ENCODE measurements at regions of chr7 and their contacts with region 1.

Region 1: GRCh38 chr7:96479015-96479645 is 157.2 kb upstream of the SLC25A13 start:
- DNase-seq: peak in 3 of 9 donors; percentile 1 to 13 (median 5)
- ATAC-seq: no peak
- H3K4me3 ChIP-seq: peak overlapping the region; percentile 46
- H3K4me3 Mint-ChIP-seq: peak overlapping the region in 9 of 10 donors; percentile 41 to 86 (median 73)
- H3K27ac ChIP-seq: no peak overlapping the region
- H3K27ac Mint-ChIP-seq: peak overlapping the region; percentile 46 to 93 (median 79)
- H3K4me1 ChIP-seq: no peaks in the 10 kb centered on the region
- H3K4me1 Mint-ChIP-seq: peaks cover 11 to 26% (median 16%) of the 10 kb centered on the region in 7 donors
- H3K27me3 ChIP-seq: no peaks in the 10 kb centered on the region
- H3K27me3 Mint-ChIP-seq: peaks cover 0 to 8% (median 0%) of the 10 kb centered on the region in 5 donors

Region 2: GRCh38 chr7:96285579-96285978 is 193.6 kb before region 1 on chr7:
- CTCF ChIA-PET with region 1: no interaction called
- POLR2A ChIA-PET with region 1: no interaction called
- intact Hi-C with region 1: loop called in 1 of 2 experiments (anchors 10 kb)
- DNase-seq: peak in 8 of 9 donors; percentile 26 to 85 (median 78)
- ATAC-seq: peak; percentile 95
- H3K4me3 ChIP-seq: peak overlapping the region; percentile 3
- H3K4me3 Mint-ChIP-seq: peak overlapping the region; percentile 48 to 87 (median 74)
- H3K27ac ChIP-seq: peak overlapping the region; percentile 41
- H3K27ac Mint-ChIP-seq: peak overlapping the region; percentile 81 to 99 (median 94)
- H3K4me1 ChIP-seq: peaks cover 21 to 25% of the 10 kb centered on the region in 2 donors
- H3K4me1 Mint-ChIP-seq: peaks cover 29 to 56% (median 46%) of the 10 kb centered on the region in 7 donors
- H3K27me3 ChIP-seq: no peaks in the 10 kb centered on the region
- H3K27me3 Mint-ChIP-seq: no peaks in the 10 kb centered on the region

Region 3: DNA sequence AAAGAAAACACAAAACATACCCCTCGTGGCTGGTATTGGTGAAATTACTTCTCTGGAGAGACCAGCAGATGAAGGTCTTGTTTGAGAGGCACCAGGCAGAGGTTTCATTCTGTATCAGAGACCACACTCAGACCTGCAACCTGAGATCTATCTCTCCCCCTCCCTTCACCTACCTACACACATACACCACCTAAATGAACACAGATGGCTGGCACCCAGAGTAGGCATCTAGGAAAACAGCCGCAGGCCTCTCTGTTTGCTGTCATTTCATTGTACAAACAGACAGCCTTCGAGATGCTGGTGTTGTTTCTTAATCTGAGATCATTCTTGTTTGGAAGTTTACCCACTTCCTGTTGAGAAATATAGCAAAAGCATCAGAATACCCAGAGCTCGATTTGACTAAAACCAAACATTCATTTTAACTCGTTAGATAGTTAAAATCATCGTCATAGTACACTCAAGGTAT is 16.7 kb after region 1 on chr7:
- CTCF ChIA-PET with region 1: no interaction called
- POLR2A ChIA-PET with region 1: no interaction called
- intact Hi-C with region 1: loop called in 1 of 2 experiments (anchors 2 kb)
- DNase-seq: peak in 3 of 9 donors; percentile 6 to 28 (median 23)
- ATAC-seq: no peak
- H3K4me3 ChIP-seq: no peak overlapping the region
- H3K4me3 Mint-ChIP-seq: peak overlapping the region in 2 of 10 donors; percentile 10 to 74
- H3K27ac ChIP-seq: no peak overlapping the region
- H3K27ac Mint-ChIP-seq: peak overlapping the region in 4 of 9 donors; percentile 22 to 93 (median 46)
- H3K4me1 ChIP-seq: no peaks in the 10 kb centered on the region
- H3K4me1 Mint-ChIP-seq: peaks cover 0 to 25% (median 14%) of the 10 kb centered on the region in 7 donors
- H3K27me3 ChIP-seq: no peaks in the 10 kb centered on the region
- H3K27me3 Mint-ChIP-seq: peaks cover 0 to 16% (median 5%) of the 10 kb centered on the region in 5 donors

Region 4: DNA sequence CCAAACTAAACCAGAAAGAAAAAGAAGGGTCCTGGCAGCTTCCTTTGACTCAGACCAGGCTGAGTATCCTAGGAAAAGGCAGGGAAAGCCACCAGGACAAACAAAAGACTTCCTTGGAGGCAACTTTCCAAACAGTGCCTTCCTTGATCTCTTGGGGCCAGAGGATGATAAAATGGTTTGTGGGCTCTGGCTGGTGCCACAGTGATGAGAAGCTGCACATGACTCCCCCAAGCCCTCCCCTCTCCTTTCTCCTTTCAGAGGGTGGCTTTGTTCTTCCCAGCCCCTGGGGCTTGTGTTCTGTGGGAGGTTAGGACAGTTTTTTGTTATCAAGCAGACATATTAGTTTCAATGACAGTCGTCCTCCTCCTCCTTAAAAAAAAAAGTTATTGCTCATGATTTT is 47.4 kb after region 1 on chr7:
- CTCF ChIA-PET with region 1: no interaction called
- POLR2A ChIA-PET with region 1: no interaction called
- intact Hi-C with region 1: no loop called
- DNase-seq: no peak
- ATAC-seq: no peak
- H3K4me3 ChIP-seq: no peak overlapping the region
- H3K4me3 Mint-ChIP-seq: no peak overlapping the region
- H3K27ac ChIP-seq: no peak overlapping the region
- H3K27ac Mint-ChIP-seq: no peak overlapping the region
- H3K4me1 ChIP-seq: no peaks in the 10 kb centered on the region
- H3K4me1 Mint-ChIP-seq: peaks cover 0 to 4% (median 0%) of the 10 kb centered on the region in 7 donors
- H3K27me3 ChIP-seq: no peaks in the 10 kb centered on the region
- H3K27me3 Mint-ChIP-seq: peaks cover 17 to 34% (median 26%) of the 10 kb centered on the region in 5 donors

Region 5: GRCh38 chr7:96685353-96685752 is 206.2 kb after region 1 on chr7:
- CTCF ChIA-PET with region 1: no interaction called
- POLR2A ChIA-PET with region 1: no interaction called
- intact Hi-C with region 1: loop called in 1 of 2 experiments (anchors 10 kb)
- DNase-seq: no peak
- ATAC-seq: no peak
- H3K4me3 ChIP-seq: no peak overlapping the region
- H3K4me3 Mint-ChIP-seq: peak overlapping the region in 1 of 10 donors; percentile 71
- H3K27ac ChIP-seq: no peak overlapping the region
- H3K27ac Mint-ChIP-seq: peak overlapping the region in 1 of 9 donors; percentile 85
- H3K4me1 ChIP-seq: peaks cover 0 to 7% of the 10 kb centered on the region in 2 donors
- H3K4me1 Mint-ChIP-seq: peaks cover 9 to 39% (median 23%) of the 10 kb centered on the region in 7 donors
- H3K27me3 ChIP-seq: no peaks in the 10 kb centered on the region
- H3K27me3 Mint-ChIP-seq: no peaks in the 10 kb centered on the region

Region 6: GRCh38 chr7:96837593-96837992 is 358.5 kb after region 1 on chr7:
- CTCF ChIA-PET with region 1: no interaction called
- POLR2A ChIA-PET with region 1: no interaction called
- intact Hi-C with region 1: loop called in 1 of 2 experiments (anchors 10 kb)
- DNase-seq: peak in 8 of 9 donors; percentile 22 to 81 (median 70)
- ATAC-seq: peak; percentile 91
- H3K4me3 ChIP-seq: no peak overlapping the region
- H3K4me3 Mint-ChIP-seq: peak overlapping the region; percentile 5 to 85 (median 76)
- H3K27ac ChIP-seq: no peak overlapping the region
- H3K27ac Mint-ChIP-seq: peak overlapping the region in 4 of 9 donors; percentile 6 to 60 (median 28)
- H3K4me1 ChIP-seq: peaks cover 16 to 26% of the 10 kb centered on the region in 2 donors
- H3K4me1 Mint-ChIP-seq: peaks cover 21 to 46% (median 35%) of the 10 kb centered on the region in 7 donors
- H3K27me3 ChIP-seq: no peaks in the 10 kb centered on the region
- H3K27me3 Mint-ChIP-seq: peaks cover 17 to 58% (median 41%) of the 10 kb centered on the region in 5 donors

Measured in naive thymus-derived CD4-positive, alpha-beta T cell (primary cell).